GM12878 (cell line): ENCODE measurements at regions of chr1 and their contacts with region 1.

Region 1: DNA sequence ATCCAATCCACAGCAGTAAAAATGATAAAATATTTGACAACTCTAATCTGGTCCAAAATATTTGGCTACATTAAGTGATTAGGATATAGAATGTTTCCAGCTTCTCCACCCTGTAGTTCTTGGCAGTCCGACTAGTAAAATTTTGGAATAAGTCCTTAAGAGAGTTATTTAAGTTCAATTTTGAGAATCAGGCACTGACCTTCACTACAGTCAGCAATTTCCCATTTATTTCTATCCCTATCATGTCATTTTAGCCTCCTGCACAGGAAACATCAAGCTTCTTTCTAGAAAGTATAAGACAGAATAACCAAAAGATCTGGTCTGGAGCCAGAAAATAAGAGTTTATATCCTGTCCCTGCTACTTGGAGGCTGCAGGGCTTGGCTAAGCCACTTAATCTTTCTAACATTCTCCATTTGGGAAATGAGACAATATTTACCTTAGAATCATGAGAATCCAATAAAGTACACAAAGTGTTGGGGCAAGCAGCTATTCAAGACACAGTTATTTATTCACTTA is 162.2 kb downstream of the DPYD start:
- DNase-seq: no peak
- ATAC-seq: no peak
- H3K4me3 ChIP-seq: no peak overlapping the region
- H3K27ac ChIP-seq: no peak overlapping the region
- H3K4me1 ChIP-seq: no peaks in the 10 kb centered on the region
- H3K27me3 ChIP-seq: no peaks in the 10 kb centered on the region
- CTCF ChIP-seq: no peak
- EP300 ChIP-seq: no peak
- POLR2A ChIP-seq: no peak
- RAD21 ChIP-seq: no peak

Region 2: GRCh38 chr1:97745912-97746311 is 12.7 kb before region 1 on chr1:
- CTCF ChIA-PET with region 1: interaction called, 3 read pairs
- POLR2A ChIA-PET with region 1: interaction called, 3 read pairs
- RAD21 ChIA-PET with region 1: no interaction called
- SMC1A ChIA-PET with region 1: interaction called, 12 read pairs
- in situ Hi-C with region 1: no loop called
- intact Hi-C with region 1: no loop called
- DNase-seq: no peak
- ATAC-seq: no peak
- H3K4me3 ChIP-seq: no peak overlapping the region
- H3K27ac ChIP-seq: no peak overlapping the region
- H3K4me1 ChIP-seq: no peaks in the 10 kb centered on the region
- H3K27me3 ChIP-seq: no peaks in the 10 kb centered on the region
- CTCF ChIP-seq: no peak
- EP300 ChIP-seq: no peak
- POLR2A ChIP-seq: no peak
- RAD21 ChIP-seq: no peak

Region 3: GRCh38 chr1:97864615-97865014 is 106.0 kb after region 1 on chr1:
- CTCF ChIA-PET with region 1: no interaction called
- POLR2A ChIA-PET with region 1: no interaction called
- RAD21 ChIA-PET with region 1: no interaction called
- SMC1A ChIA-PET with region 1: no interaction called
- in situ Hi-C with region 1: no loop called
- intact Hi-C with region 1: no loop called
- DNase-seq: no peak
- ATAC-seq: peak; percentile 85
- H3K4me3 ChIP-seq: 0 out of 2 replicates have a peak overlapping the region, but pooled peaks have one; percentile 31
- H3K27ac ChIP-seq: peak overlapping the region; percentile 35
- H3K4me1 ChIP-seq: no peaks in the 10 kb centered on the region
- H3K27me3 ChIP-seq: no peaks in the 10 kb centered on the region
- CTCF ChIP-seq: no peak
- EP300 ChIP-seq: no peak
- POLR2A ChIP-seq: no peak
- RAD21 ChIP-seq: no peak